ENCODE measurements at regions of chr13 and their contacts with region 1.

Region 1: GRCh38 chr13:45194081-45194939 is 6.5 kb downstream of the KCTD4 start:
- DNase-seq: peak; percentile 78
- H3K4me3 Mint-ChIP-seq: peak overlapping the region; percentile 72
- H3K27ac Mint-ChIP-seq: peak overlapping the region; percentile 75
- H3K4me1 Mint-ChIP-seq: peaks cover 24% of the 10 kb centered on the region
- H3K27me3 Mint-ChIP-seq: no peaks in the 10 kb centered on the region
- CTCF ChIP-seq: peak; percentile 69

Region 2: DNA sequence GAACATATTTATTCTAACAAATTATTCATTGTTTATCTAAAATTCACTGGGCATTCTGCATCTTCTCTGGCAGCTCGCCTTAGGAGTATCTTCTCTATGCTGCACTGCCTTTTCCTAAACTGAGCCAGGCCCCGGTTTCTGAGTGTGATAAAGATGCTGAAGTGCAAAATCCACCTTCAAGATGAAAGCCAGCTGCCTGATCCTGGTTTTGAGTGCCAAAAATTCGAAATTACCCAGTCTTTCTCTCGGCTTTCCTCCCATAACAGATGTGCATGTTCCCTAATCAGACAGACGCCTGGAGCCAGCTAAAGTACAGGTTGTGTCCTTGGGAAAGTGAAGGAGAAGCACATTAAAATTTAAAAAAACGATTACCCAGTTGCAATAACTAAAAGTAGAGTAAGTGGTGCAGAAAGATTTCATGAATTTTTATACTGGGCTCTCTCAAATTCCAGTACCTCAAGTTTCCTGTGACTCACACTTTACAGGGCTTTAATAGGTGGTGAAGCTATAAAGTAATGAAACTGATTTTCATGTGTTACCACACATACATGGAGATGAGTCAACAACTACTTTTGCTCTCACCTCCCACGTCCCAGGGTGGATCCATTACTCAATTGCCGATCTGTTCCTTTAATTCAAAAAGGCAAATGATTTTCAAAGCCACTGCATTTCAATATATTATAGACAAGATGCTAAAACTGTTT is 139.0 kb before region 1 on chr13:
- CTCF ChIA-PET with region 1: interaction called, 4 read pairs
- POLR2A ChIA-PET with region 1: interaction called, 39 read pairs
- intact Hi-C with region 1: no loop called
- DNase-seq: peak; percentile 93
- H3K4me3 Mint-ChIP-seq: peak overlapping the region; percentile 66
- H3K27ac Mint-ChIP-seq: peak overlapping the region; percentile 88
- H3K4me1 Mint-ChIP-seq: peaks cover 14% of the 10 kb centered on the region
- H3K27me3 Mint-ChIP-seq: no peaks in the 10 kb centered on the region
- CTCF ChIP-seq: no peak

Region 3: DNA sequence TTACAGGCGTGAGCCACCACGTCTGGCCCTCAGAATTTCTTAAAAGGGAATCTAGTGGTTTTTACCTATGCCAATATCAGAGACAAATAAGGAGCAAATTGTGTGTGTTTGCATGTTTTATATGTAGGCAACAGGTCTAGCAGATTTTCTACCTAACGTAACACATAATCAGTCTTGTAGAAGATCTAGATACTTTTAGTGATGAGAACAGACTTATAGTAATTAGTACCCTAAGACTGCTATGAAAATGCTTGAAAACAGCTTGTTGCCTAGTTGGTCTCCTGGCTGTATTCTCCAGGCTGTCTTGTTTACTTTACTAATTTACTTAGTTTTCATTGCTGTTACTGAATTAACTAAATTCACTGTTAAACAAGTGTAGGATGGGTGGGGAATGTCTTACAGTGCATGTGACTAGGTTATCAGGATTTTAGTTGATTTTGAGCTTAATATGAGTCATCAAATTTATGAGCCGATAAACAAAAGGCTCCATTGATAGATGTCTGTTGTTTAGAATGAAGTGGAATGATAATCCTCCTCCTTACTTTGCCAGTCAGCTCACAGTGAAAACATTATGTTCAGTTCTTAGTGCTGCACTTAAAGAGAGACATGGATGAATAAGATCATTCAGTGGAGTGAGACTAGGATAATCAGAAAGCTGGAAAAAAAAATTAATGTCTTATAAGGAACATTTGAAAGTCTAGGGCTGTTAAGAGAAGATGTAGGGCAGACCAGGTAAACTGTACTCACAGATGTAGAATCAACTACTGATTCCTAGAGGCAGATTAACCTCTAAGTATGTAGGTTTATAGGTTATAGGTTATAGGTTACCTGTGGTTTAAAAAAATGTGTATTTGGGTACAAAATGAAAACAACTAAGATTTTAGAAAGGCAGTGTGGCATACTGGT is 51.6 kb before region 1 on chr13:
- CTCF ChIA-PET with region 1: interaction called, 3 read pairs
- POLR2A ChIA-PET with region 1: interaction called, 15 read pairs
- intact Hi-C with region 1: no loop called
- DNase-seq: no peak
- H3K4me3 Mint-ChIP-seq: no peak overlapping the region
- H3K27ac Mint-ChIP-seq: peak overlapping the region; percentile 78
- H3K4me1 Mint-ChIP-seq: peaks cover 24% of the 10 kb centered on the region
- H3K27me3 Mint-ChIP-seq: no peaks in the 10 kb centered on the region
- CTCF ChIP-seq: no peak

Region 4: GRCh38 chr13:45178349-45179162 is 15.8 kb before region 1 on chr13:
- CTCF ChIA-PET with region 1: interaction called, 5 read pairs
- POLR2A ChIA-PET with region 1: interaction called, 17 read pairs
- intact Hi-C with region 1: no loop called
- DNase-seq: peak; percentile 14
- H3K4me3 Mint-ChIP-seq: no peak overlapping the region
- H3K27ac Mint-ChIP-seq: peak overlapping the region; percentile 11
- H3K4me1 Mint-ChIP-seq: peaks cover 15% of the 10 kb centered on the region
- H3K27me3 Mint-ChIP-seq: no peaks in the 10 kb centered on the region
- CTCF ChIP-seq: no peak

Region 5: GRCh38 chr13:45242070-45242469 is 47.8 kb after region 1 on chr13:
- CTCF ChIA-PET with region 1: interaction called, 26 read pairs
- POLR2A ChIA-PET with region 1: interaction called, 38 read pairs
- intact Hi-C with region 1: no loop called
- DNase-seq: peak; percentile 71
- H3K4me3 Mint-ChIP-seq: peak overlapping the region; percentile 4
- H3K27ac Mint-ChIP-seq: peak overlapping the region; percentile 2
- H3K4me1 Mint-ChIP-seq: peaks cover 23% of the 10 kb centered on the region
- H3K27me3 Mint-ChIP-seq: no peaks in the 10 kb centered on the region
- CTCF ChIP-seq: no peak

Region 6: DNA sequence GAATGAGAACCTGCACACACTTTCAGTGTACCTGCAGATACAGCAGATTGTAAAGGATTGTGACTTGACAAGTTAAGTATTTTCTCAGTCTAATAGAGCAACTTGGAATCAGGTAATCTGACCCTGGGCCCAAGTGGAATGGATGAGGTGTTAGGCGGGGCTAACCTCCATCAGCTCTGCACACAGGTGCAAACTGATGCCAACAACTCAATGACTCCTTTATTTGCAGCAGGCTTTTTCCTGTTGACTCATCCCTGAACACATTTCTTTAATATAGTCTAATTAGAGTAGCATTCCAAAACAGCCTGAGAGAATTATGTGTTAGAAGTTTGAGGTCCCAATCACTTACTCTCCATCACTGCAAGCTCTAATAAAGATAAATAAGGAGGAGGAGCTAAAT is 97.9 kb after region 1 on chr13:
- CTCF ChIA-PET with region 1: interaction called, 11 read pairs
- POLR2A ChIA-PET with region 1: interaction called, 3 read pairs
- intact Hi-C with region 1: no loop called
- DNase-seq: peak; percentile 61
- H3K4me3 Mint-ChIP-seq: no peak overlapping the region
- H3K27ac Mint-ChIP-seq: no peak overlapping the region
- H3K4me1 Mint-ChIP-seq: peaks cover 13% of the 10 kb centered on the region
- H3K27me3 Mint-ChIP-seq: no peaks in the 10 kb centered on the region
- CTCF ChIP-seq: no peak